Breast epithelium (tissue), 4 donors: ENCODE measurements at regions of chr10 and their contacts with region 1.

Region 1: DNA sequence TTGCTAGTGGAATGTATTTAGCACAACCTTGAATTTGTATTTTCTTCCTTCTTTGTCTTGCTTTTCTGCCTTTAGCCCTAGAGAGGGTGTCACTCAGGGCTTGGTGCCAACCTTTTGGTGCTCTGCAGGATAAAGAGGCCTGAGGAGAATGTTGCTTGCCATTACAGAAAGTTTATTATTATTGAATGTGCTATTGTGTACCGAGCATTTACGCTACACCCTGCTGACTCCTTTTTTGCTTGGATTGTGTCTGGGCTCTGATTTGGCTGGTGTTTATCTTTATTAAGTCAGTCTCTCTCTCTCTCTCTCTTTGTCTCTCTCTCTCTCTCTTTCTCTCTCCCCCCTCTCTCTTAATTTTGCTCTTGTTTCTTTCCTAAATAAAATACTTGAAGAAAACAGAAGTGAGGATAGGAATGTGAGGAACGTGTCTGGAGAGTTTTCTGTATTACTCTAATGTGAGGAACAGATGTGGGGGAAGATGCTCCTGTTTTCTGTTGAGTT is 284.4 kb upstream of the PHYHIPL start:
- DNase-seq: no peak
- H3K4me3 ChIP-seq: no peak overlapping the region
- H3K27ac ChIP-seq: no peak overlapping the region
- H3K4me1 ChIP-seq: no peaks in the 10 kb centered on the region
- H3K27me3 ChIP-seq: no peaks in the 10 kb centered on the region
- CTCF ChIP-seq: no peak
- POLR2A ChIP-seq: no peak

Region 2: DNA sequence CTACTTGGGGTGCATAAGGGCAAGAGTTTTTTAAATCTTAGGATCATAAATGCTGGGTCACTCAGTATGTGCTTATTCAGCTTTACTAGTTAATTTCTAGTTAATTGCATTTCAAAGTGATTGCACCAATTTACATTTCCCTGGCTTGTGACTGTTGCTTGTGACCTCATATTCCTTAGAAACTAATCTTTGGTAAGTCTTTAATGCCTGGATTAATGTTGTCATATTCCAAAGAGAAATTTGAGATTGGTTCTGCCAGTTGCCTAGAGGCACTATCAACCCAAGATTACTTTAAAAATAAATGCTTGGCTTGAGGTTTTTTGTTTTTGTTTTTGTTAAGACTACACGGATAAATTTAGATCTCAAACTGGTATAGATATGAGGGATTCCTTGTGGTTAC is 1394.5 kb after region 1 on chr10:
- intact Hi-C with region 1: loop called (anchors 5 kb)
- DNase-seq: no peak
- H3K4me3 ChIP-seq: no peak overlapping the region
- H3K27ac ChIP-seq: no peak overlapping the region
- H3K4me1 ChIP-seq: no peaks in the 10 kb centered on the region
- H3K27me3 ChIP-seq: no peaks in the 10 kb centered on the region
- CTCF ChIP-seq: no peak
- POLR2A ChIP-seq: no peak